PC-9 (cell line): ENCODE measurements at regions of chr1 and their contacts with region 1.

Region 1: DNA sequence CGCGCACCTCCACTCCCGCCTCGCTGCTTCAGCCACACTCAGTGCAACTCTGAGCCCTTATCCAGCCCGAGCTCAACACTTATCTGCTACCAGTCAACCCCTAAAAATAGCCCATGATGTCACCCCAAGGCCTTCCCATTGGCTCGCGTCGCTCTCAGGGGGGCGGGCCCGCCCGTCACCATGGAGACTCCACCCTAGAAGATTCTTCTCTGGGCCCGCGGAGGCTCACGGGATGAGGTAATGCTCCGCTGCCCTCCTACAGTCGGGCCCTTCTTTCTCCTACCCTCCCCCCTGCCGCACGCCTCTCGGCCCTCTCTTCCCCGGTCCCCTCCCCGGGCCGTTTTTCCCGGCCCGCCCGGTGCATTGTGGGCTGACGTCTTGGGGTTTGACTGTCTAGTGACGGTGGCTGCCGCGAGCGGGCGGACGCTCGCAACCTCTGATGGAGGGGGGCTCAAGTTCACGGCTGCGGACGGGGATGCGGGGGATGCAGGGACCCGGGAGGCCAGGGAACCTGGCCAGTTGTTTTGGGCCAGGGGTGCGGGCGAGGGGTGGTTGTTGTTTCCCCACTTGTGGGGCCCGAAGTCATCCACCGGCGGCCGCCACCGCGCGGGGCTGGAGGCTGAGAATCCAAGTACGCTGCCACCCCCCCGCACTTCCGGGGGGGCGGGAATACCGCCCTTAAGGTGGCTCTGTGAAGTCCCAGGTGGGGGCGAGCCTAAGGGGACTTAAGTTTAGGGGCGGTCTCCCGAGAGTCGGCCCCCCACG is at the start of gene JUN:
- DNase-seq: peak; percentile 96 to 99
- H3K4me3 ChIP-seq: peak within 1 kb of the TSS; percentile 94
- H3K27ac ChIP-seq: peak within 1 kb of the TSS; percentile 99
- H3K4me1 ChIP-seq: peaks cover 33% of the 10 kb centered on the region
- H3K27me3 ChIP-seq: no peaks in the 10 kb centered on the region
- CTCF ChIP-seq: no peak
- total RNA-seq, gene JUN: 74.7 and 93.7 TPM in 2 replicates

Region 2: GRCh38 chr1:58515794-58516401 is 268.3 kb before region 1 on chr1:
- CTCF ChIA-PET with region 1: no interaction called
- POLR2A ChIA-PET with region 1: no interaction called
- intact Hi-C with region 1: loop called (anchors 10 kb)
- DNase-seq: peak; percentile 25 to 61
- H3K4me3 ChIP-seq: no peak overlapping the region
- H3K27ac ChIP-seq: no peak overlapping the region
- H3K4me1 ChIP-seq: no peaks in the 10 kb centered on the region
- H3K27me3 ChIP-seq: no peaks in the 10 kb centered on the region
- CTCF ChIP-seq: peak; percentile 86

Region 3: GRCh38 chr1:58848818-58849411 is 64.7 kb after region 1 on chr1:
- CTCF ChIA-PET with region 1: no interaction called
- POLR2A ChIA-PET with region 1: interaction called, 8 read pairs
- intact Hi-C with region 1: loop called (anchors 1 kb)
- DNase-seq: peak; percentile 95 to 98
- H3K4me3 ChIP-seq: peak overlapping the region; percentile 27
- H3K27ac ChIP-seq: peak overlapping the region; percentile 92
- H3K4me1 ChIP-seq: peaks cover 59% of the 10 kb centered on the region
- H3K27me3 ChIP-seq: no peaks in the 10 kb centered on the region
- CTCF ChIP-seq: no peak; the same call in 1 of the 2 replicates

Region 4: DNA sequence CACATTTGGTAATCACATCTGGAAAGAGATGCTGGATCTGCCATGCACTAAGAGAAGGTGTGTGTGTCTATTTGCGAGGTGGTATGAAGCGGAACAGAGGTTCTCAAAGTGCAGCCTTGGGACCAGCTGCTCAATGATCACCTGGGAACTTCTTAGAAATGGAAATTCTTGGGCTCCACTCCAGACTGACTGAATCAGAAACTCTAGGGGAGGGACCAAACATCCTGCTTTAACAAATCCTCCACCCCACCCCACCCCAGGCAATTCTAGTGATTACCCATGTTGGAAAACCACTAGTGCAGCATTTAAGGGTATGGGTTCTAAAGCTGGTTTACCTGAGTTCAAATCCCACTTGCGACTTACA is 143.5 kb after region 1 on chr1:
- CTCF ChIA-PET with region 1: no interaction called
- POLR2A ChIA-PET with region 1: interaction called, 14 read pairs
- intact Hi-C with region 1: no loop called
- DNase-seq: peak in 1 of 2 experiments; percentile 18
- H3K4me3 ChIP-seq: no peak overlapping the region
- H3K27ac ChIP-seq: peak overlapping the region; percentile 78; the same call in 1 of the 2 replicates
- H3K4me1 ChIP-seq: peaks cover 61% of the 10 kb centered on the region
- H3K27me3 ChIP-seq: no peaks in the 10 kb centered on the region
- CTCF ChIP-seq: no peak

Region 5: GRCh38 chr1:59057211-59057694 is 273.1 kb after region 1 on chr1:
- CTCF ChIA-PET with region 1: no interaction called
- POLR2A ChIA-PET with region 1: interaction called, 7 read pairs
- intact Hi-C with region 1: loop called (anchors 1 kb)
- DNase-seq: peak; percentile 50 to 68
- H3K4me3 ChIP-seq: no peak overlapping the region
- H3K27ac ChIP-seq: no peak overlapping the region
- H3K4me1 ChIP-seq: peaks cover 22% of the 10 kb centered on the region
- H3K27me3 ChIP-seq: no peaks in the 10 kb centered on the region
- CTCF ChIP-seq: no peak

Region 6: DNA sequence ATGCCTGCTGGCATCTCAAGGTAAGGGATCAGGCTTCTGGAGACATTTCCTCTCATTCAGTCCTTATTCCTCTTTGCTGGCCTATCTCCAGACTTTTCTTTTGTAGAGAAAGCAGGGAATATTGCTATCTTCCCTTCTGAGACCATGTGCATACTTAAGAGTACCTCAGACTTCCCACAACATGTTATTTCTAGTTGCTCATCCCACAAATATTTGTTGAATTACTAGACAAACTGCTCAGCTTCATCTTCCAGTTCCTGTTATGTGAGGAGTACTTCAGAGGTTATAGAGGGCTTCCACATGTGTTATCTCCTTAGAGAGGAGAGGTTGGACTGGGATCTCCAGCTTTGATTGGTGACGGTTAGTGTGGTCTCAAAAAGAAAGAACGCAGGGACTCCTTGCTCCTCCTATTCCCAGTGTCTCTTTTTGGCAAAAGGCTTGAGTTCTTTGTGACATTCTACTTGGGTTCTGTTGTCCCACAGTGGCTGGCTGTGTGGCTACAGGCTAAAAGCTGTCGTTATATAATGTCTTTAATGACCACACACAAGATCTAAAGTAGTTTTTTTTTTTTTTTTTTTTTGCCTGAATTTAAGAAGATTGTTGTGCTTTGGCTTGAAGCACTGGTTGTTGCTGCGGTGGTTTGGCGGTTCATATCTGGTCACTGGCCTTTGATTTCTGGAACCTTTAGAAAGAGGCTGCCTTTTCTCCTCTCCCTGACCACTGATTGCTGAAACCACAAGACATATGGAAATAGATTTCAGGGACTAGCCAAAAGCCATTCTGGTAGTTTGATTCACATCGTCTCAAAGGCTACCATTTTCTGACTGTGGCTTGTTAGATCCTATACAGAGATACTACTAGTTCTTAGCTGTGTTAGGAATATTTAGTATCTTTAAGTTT is 591.4 kb after region 1 on chr1:
- CTCF ChIA-PET with region 1: no interaction called
- POLR2A ChIA-PET with region 1: no interaction called
- intact Hi-C with region 1: loop called (anchors 1 kb)
- DNase-seq: peak; percentile 25 to 54
- H3K4me3 ChIP-seq: no peak overlapping the region
- H3K27ac ChIP-seq: no peak overlapping the region
- H3K4me1 ChIP-seq: no peaks in the 10 kb centered on the region
- H3K27me3 ChIP-seq: no peaks in the 10 kb centered on the region
- CTCF ChIP-seq: no peak

Region 7: GRCh38 chr1:59678493-59679228 is 894.5 kb after region 1 on chr1:
- CTCF ChIA-PET with region 1: no interaction called
- POLR2A ChIA-PET with region 1: interaction called, 11 read pairs
- intact Hi-C with region 1: no loop called
- DNase-seq: peak in 1 of 2 experiments; percentile 17
- H3K4me3 ChIP-seq: no peak overlapping the region
- H3K27ac ChIP-seq: no peak overlapping the region
- H3K4me1 ChIP-seq: 0 out of 2 replicates have a peak, but pooled peaks cover 2% of the 10 kb centered on the region
- H3K27me3 ChIP-seq: no peaks in the 10 kb centered on the region
- CTCF ChIP-seq: no peak